Vagina (tissue), 2 donors: ENCODE measurements at regions of chr14 and their contacts with region 1.

Region 1: GRCh38 chr14:71286135-71286534 is 378.9 kb downstream of the PCNX1 start:
- DNase-seq: no peak
- H3K4me3 ChIP-seq: no peak overlapping the region
- H3K27ac ChIP-seq: no peak overlapping the region
- H3K4me1 ChIP-seq: no peaks in the 10 kb centered on the region
- H3K27me3 ChIP-seq: no peaks in the 10 kb centered on the region
- CTCF ChIP-seq: no peak
- POLR2A ChIP-seq: no peak

Region 2: GRCh38 chr14:71300566-71301330 is 14.6 kb after region 1 on chr14:
- intact Hi-C with region 1: loop called (anchors 1 kb)
- DNase-seq: no peak
- H3K4me3 ChIP-seq: no peak overlapping the region
- H3K27ac ChIP-seq: no peak overlapping the region
- H3K4me1 ChIP-seq: no peaks in the 10 kb centered on the region
- H3K27me3 ChIP-seq: no peaks in the 10 kb centered on the region
- CTCF ChIP-seq: no peak
- POLR2A ChIP-seq: no peak

Region 3: DNA sequence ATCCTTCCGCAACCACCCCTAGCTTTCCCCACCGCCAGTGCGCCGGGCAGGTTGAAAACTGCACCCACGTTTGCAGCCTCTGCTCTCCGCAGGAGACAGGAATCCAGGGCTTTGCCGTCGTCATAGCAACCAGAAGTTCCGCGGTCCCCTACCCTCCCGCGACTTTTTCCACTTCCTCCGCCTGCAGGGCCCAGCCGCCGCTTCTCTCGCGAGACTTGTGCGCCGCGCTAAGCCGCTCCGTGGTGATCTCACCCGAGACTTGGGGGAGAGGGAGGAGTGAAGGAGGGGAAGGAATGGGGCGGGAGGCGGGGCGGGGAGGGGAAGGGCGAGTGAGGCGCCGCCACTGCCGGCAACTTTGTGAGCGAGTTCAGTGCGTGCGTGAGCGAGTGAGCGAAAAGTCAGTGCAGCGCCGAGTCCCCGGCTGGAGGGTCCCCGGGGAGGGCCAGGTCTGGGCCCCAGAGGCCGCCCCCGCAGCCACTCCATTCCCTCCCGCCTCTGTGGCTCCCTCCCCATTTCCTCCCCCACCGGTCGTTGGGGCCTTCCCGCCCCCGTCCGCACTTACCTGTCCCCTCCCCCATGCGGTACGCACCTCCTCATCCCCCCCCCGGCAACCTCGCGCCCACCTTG is 34.1 kb after region 1 on chr14:
- intact Hi-C with region 1: no loop called
- DNase-seq: peak in 1 of 2 donors; percentile 99
- H3K4me3 ChIP-seq: peak within 1 kb of the TSS; percentile 85 to 91
- H3K27ac ChIP-seq: peak within 1 kb of the TSS; percentile 98
- H3K4me1 ChIP-seq: peaks cover 16% of the 10 kb centered on the region
- H3K27me3 ChIP-seq: no peaks in the 10 kb centered on the region
- CTCF ChIP-seq: no peak
- POLR2A ChIP-seq: peak in 1 of 2 donors; percentile 84